Vagina (tissue), 2 donors: ENCODE measurements at regions of chr11 and their contacts with region 1.

Region 1: GRCh38 chr11:111766093-111766833 is at the start of gene PPP2R1B:
- DNase-seq: peak in 1 of 2 donors; percentile 94
- H3K4me3 ChIP-seq: peak within 1 kb of the TSS; percentile 73 to 96
- H3K27ac ChIP-seq: peak within 1 kb of the TSS; percentile 93
- H3K4me1 ChIP-seq: peaks cover 26% of the 10 kb centered on the region
- H3K27me3 ChIP-seq: no peaks in the 10 kb centered on the region
- CTCF ChIP-seq: no peak
- POLR2A ChIP-seq: peak in 1 of 2 donors; percentile 26
- total RNA-seq, gene PPP2R1B: 35.6 TPM

Region 2: GRCh38 chr11:111601979-111602864 is 164.0 kb before region 1 on chr11 and contains the start of gene SIK2:
- intact Hi-C with region 1: loop called (anchors 2 kb)
- DNase-seq: peak in 1 of 2 donors; percentile 97
- H3K4me3 ChIP-seq: peak within 1 kb of the TSS; percentile 66 to 77
- H3K27ac ChIP-seq: peak within 1 kb of the TSS; percentile 94
- H3K4me1 ChIP-seq: peaks cover 33% of the 10 kb centered on the region
- H3K27me3 ChIP-seq: no peaks in the 10 kb centered on the region
- CTCF ChIP-seq: peak; percentile 60 to 95 (median 93)
- POLR2A ChIP-seq: no peak
- total RNA-seq, gene SIK2: 16.7 TPM

Region 3: GRCh38 chr11:111735262-111736116 is 30.8 kb before region 1 on chr11:
- intact Hi-C with region 1: loop called (anchors 5 kb)
- DNase-seq: peak in 1 of 2 donors; percentile 96
- H3K4me3 ChIP-seq: peak overlapping the region; percentile 37 to 42
- H3K27ac ChIP-seq: peak overlapping the region; percentile 95
- H3K4me1 ChIP-seq: peaks cover 65% of the 10 kb centered on the region
- H3K27me3 ChIP-seq: no peaks in the 10 kb centered on the region
- CTCF ChIP-seq: no peak
- POLR2A ChIP-seq: peak in 1 of 2 donors; percentile 47